Endothelial cell of umbilical vein (primary cell): ENCODE measurements at regions of chr4 and their contacts with region 1.

Region 1: DNA sequence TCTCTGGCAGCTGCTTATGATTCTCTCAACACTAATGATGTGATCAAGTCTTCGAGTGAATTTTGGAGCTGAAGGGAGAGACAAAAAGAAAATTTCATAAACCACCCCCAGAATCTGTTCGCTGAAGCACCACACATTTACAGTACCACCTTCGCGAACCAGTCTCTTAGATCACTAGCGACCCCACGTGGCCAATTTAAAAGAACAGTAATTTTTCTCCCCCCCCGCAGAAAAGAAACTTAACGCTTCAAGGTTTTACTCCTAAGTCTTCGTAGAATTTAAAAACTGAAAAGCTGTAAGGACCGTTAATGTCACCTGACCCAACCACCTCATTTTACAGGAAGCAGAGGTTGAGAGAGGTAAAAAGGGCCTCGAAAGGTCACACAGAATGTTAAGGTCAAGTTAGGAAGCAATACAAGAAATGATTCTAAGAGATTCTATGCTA is 187.5 kb downstream of the QDPR start:
- DNase-seq: peak; percentile 72
- H3K4me3 ChIP-seq: no peak overlapping the region
- H3K27ac ChIP-seq: no peak overlapping the region
- H3K4me1 ChIP-seq: peaks cover 22% of the 10 kb centered on the region
- H3K27me3 ChIP-seq: no peaks in the 10 kb centered on the region
- CTCF ChIP-seq: peak; percentile 50 to 53
- POLR2A ChIP-seq: no peak

Region 2: GRCh38 chr4:16443504-16444088 is 880.8 kb before region 1 on chr4:
- CTCF ChIA-PET with region 1: no interaction called
- POLR2A ChIA-PET with region 1: no interaction called
- dilution Hi-C with region 1: no loop called
- intact Hi-C with region 1: loop called (anchors 10 kb)
- DNase-seq: peak; percentile 47
- H3K4me3 ChIP-seq: no peak overlapping the region
- H3K27ac ChIP-seq: no peak overlapping the region
- H3K4me1 ChIP-seq: no peaks in the 10 kb centered on the region
- H3K27me3 ChIP-seq: peaks cover 9 to 10% of the 10 kb centered on the region in 2 experiments
- CTCF ChIP-seq: peak; percentile 56 to 63
- POLR2A ChIP-seq: no peak

Region 3: DNA sequence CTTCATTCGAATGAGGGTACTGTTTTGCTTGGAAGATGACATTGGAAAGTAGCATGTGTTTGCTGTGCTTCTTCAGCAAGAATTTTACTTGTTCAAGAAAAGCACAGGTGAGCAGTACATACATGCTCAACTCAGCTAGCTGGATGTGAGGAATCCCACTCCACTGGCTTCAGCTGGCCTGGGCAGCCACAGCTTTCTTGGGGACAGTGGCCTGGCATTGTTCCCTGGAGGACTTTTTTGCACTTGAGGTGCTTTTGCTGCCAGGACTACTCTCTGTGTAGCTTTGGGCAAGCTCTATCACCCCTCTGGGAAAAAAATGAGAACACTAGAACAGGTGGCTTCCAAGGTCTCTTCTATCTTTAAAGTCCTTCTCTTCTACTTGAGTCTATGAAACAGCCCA is 610.2 kb before region 1 on chr4:
- CTCF ChIA-PET with region 1: no interaction called
- POLR2A ChIA-PET with region 1: no interaction called
- dilution Hi-C with region 1: no loop called
- intact Hi-C with region 1: no loop called
- DNase-seq: no peak
- H3K4me3 ChIP-seq: no peak overlapping the region
- H3K27ac ChIP-seq: no peak overlapping the region
- H3K4me1 ChIP-seq: no peaks in the 10 kb centered on the region
- H3K27me3 ChIP-seq: no peaks in the 10 kb centered on the region
- CTCF ChIP-seq: no peak
- POLR2A ChIP-seq: no peak

Region 4: DNA sequence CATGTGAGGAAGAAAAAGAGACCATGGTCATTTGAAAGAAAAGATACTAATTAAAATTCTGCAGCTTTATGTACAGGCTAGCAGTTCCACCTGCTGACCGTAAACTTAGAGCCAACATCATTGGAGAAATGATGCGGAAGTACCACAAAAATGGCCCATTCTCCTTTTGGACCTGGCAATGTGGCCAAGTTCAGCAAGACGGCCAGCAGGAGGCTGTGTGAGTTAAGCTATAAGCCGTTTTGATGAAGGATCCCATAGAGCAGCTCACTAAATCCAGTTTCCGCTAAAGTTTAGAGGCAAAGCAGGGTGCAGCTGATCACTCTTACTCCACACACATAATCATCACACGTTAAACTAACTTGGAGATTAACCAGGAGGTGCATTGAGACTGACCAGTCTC is 559.8 kb before region 1 on chr4:
- CTCF ChIA-PET with region 1: interaction called, 24 read pairs
- POLR2A ChIA-PET with region 1: no interaction called
- dilution Hi-C with region 1: no loop called
- intact Hi-C with region 1: loop called (anchors 1 kb)
- DNase-seq: peak; percentile 21
- H3K4me3 ChIP-seq: no peak overlapping the region
- H3K27ac ChIP-seq: no peak overlapping the region
- H3K4me1 ChIP-seq: no peaks in the 10 kb centered on the region
- H3K27me3 ChIP-seq: no peaks in the 10 kb centered on the region
- CTCF ChIP-seq: peak; percentile 16 to 38
- POLR2A ChIP-seq: no peak

Region 5: GRCh38 chr4:17013382-17014006 is 310.9 kb before region 1 on chr4:
- CTCF ChIA-PET with region 1: interaction called, 10 read pairs
- POLR2A ChIA-PET with region 1: no interaction called
- dilution Hi-C with region 1: no loop called
- intact Hi-C with region 1: no loop called
- DNase-seq: peak; percentile 80
- H3K4me3 ChIP-seq: no peak overlapping the region
- H3K27ac ChIP-seq: no peak overlapping the region
- H3K4me1 ChIP-seq: peaks cover 24% of the 10 kb centered on the region
- H3K27me3 ChIP-seq: no peaks in the 10 kb centered on the region
- CTCF ChIP-seq: no peak
- POLR2A ChIP-seq: no peak

Region 6: GRCh38 chr4:17336524-17336961 is 12.1 kb after region 1 on chr4:
- CTCF ChIA-PET with region 1: interaction called, 10 read pairs
- POLR2A ChIA-PET with region 1: no interaction called
- dilution Hi-C with region 1: no loop called
- intact Hi-C with region 1: loop called (anchors 1 kb)
- DNase-seq: peak; percentile 97
- H3K4me3 ChIP-seq: no peak overlapping the region
- H3K27ac ChIP-seq: peak overlapping the region; percentile 81
- H3K4me1 ChIP-seq: peaks cover 22% of the 10 kb centered on the region
- H3K27me3 ChIP-seq: no peaks in the 10 kb centered on the region
- CTCF ChIP-seq: no peak
- POLR2A ChIP-seq: peak; percentile 29

Region 7: DNA sequence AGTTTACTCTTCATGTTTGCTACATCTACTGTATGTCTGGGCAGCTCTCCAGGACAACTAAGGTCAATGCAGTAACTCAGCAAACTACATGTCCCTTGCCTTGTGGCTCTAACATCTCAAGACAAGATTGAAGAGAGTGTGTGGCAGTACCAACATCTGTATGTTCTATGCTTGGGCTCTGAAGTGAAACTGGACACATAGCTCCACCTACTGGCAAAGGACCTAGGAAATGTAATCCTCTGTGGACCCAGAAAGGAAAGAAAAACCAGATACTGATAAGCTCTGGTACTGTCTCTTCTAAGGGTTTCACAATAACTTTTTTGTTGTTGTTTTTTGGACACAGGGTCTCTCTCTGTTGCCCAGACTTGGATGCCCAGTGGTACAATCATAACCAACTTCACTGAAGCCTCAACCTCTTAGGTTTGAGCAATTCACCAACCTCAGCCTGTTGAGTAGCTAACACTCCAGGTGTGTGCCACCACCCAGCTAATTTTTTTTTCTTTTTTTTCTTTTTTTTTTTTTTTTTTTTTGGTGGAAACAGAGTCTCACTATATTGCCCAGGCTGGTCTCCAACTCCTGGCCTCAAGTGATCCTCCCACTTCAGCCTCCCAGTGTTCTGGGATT is 123.4 kb after region 1 on chr4:
- CTCF ChIA-PET with region 1: interaction called, 32 read pairs
- POLR2A ChIA-PET with region 1: no interaction called
- dilution Hi-C with region 1: no loop called
- intact Hi-C with region 1: loop called (anchors 1 kb)
- DNase-seq: peak; percentile 66
- H3K4me3 ChIP-seq: no peak overlapping the region
- H3K27ac ChIP-seq: no peak overlapping the region
- H3K4me1 ChIP-seq: peaks cover 9% of the 10 kb centered on the region
- H3K27me3 ChIP-seq: no peaks in the 10 kb centered on the region
- CTCF ChIP-seq: peak; percentile 58 to 62
- POLR2A ChIP-seq: no peak